CD4-positive, alpha-beta memory T cell (primary cell): ENCODE measurements at regions of chr16 and their contacts with region 1.

Region 1: DNA sequence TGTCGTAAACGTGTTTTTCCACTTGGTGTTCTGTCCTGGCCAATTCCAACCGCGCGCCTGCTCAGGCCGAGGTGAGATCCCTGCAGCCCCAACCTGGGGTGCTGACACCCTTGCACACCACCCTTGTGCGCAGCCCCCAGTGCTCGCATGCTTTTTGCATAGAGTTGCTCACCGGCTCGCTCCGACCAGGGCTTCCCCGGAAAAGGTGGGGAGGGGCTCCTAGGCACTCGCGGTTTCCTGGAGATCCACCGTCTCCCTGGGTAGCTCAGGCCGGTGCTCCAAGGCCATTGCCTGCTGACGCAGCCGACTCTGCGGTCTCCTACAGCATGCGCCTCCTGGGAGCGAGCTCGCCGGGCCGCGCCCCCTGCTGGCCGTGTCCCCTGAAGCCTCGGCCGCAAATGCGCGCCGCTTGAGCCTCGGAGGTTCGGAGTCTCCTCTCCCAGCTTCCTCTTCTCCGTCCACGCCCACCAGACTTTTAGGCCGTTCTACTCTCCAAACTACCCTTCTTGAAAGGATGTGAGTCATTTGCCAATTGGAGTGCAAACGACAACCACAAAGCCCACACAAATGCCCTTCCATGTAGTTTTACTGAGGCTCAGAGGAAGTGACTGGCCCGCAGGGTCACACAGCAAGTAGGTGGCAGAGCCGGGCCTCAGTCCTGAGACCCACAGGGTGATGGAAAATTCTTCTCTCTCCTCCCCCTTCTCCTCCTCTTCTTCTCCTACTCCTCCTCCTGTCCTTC is 7.2 kb upstream of the PDP2 start:
- DNase-seq: peak; percentile 80 to 94 (median 82)
- H3K4me3 ChIP-seq: peak overlapping the region in 1 of 2 donors; percentile 52
- H3K4me3 Mint-ChIP-seq: peak overlapping the region; percentile 61 to 90 (median 82)
- H3K27ac ChIP-seq: peak overlapping the region; percentile 36
- H3K27ac Mint-ChIP-seq: peak overlapping the region; percentile 75 to 95 (median 86)
- H3K4me1 ChIP-seq: peaks cover 22% of the 10 kb centered on the region
- H3K4me1 Mint-ChIP-seq: peaks cover 18 to 37% (median 23%) of the 10 kb centered on the region in 4 donors
- H3K27me3 ChIP-seq: no peaks in the 10 kb centered on the region
- H3K27me3 Mint-ChIP-seq: no peaks in the 10 kb centered on the region

Region 2: GRCh38 chr16:66490774-66491715 is 382.1 kb before region 1 on chr16:
- CTCF ChIA-PET with region 1: no interaction called
- POLR2A ChIA-PET with region 1: no interaction called
- intact Hi-C with region 1: no loop called
- DNase-seq: no peak
- H3K4me3 ChIP-seq: no peak overlapping the region
- H3K4me3 Mint-ChIP-seq: peak overlapping the region in 1 of 8 donors; percentile 36
- H3K27ac ChIP-seq: no peak overlapping the region
- H3K27ac Mint-ChIP-seq: peak overlapping the region in 3 of 7 donors; percentile 2 to 30 (median 18)
- H3K4me1 ChIP-seq: no peaks in the 10 kb centered on the region
- H3K4me1 Mint-ChIP-seq: peaks cover 0 to 2% (median 0%) of the 10 kb centered on the region in 4 donors
- H3K27me3 ChIP-seq: no peaks in the 10 kb centered on the region
- H3K27me3 Mint-ChIP-seq: peaks cover 0 to 2% of the 10 kb centered on the region in 2 donors

Region 3: GRCh38 chr16:66728117-66728787 is 144.9 kb before region 1 on chr16:
- CTCF ChIA-PET with region 1: interaction called, 18 read pairs
- POLR2A ChIA-PET with region 1: interaction called, 3 read pairs
- intact Hi-C with region 1: loop called (anchors 2 kb)
- DNase-seq: peak in 4 of 5 donors; percentile 42 to 56 (median 46)
- H3K4me3 ChIP-seq: no peak overlapping the region
- H3K4me3 Mint-ChIP-seq: no peak overlapping the region
- H3K27ac ChIP-seq: no peak overlapping the region
- H3K27ac Mint-ChIP-seq: peak overlapping the region in 5 of 7 donors; percentile 12 to 73 (median 52)
- H3K4me1 ChIP-seq: no peaks in the 10 kb centered on the region
- H3K4me1 Mint-ChIP-seq: peaks cover 3 to 6% (median 5%) of the 10 kb centered on the region in 4 donors
- H3K27me3 ChIP-seq: no peaks in the 10 kb centered on the region
- H3K27me3 Mint-ChIP-seq: no peaks in the 10 kb centered on the region

Region 4: DNA sequence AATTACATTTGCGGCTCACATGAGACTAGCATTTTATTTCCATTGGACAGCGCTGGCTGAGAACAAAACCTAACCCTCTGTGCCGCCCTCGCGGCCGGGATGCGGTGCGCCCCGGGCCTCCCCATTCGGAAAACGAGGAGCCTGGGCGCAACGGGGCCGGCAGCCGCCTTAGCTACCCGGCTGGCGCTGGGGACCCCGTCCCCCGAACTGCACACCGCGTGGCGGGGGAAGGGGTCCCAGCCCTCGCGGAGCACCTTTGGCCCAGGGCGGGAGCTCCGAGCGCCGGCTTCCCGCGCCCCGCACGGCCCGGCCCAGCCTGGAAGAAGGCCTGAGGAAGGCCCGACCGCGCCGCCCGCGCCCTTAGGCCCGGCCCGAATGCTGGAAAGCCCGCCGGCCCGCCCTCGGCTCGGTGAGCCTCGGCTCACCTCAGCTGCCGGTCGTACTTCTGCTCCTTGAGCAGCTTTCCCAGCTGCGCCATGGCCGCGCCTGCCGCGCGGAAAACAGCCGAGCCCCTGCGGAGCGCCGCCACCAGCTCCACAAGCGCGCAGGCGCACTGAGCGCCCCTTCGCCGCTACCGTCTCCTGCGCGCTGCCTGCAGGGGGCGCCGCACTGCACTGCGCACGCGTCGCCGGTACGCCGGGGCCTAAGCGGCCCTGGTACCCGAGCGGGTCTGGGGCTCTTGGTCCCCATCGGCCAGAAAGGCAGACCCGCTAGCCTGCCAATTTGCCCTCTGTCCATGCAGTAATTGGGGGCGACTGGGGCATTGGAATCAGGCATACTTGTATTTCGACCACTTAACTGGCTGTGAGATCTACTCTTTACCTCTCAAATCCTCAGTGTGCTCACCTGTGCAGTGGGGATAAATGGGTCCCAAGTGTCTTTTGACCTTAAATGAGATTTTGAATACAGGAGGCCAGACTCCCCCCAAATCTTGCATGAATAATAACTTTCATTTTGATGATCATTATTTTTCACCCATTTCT is 42.4 kb before region 1 on chr16 and contains the start of gene NAE1:
- CTCF ChIA-PET with region 1: interaction called, 95 read pairs
- POLR2A ChIA-PET with region 1: interaction called, 15 read pairs
- intact Hi-C with region 1: loop called (anchors 2 kb)
- DNase-seq: peak; percentile 81 to 94 (median 91)
- H3K4me3 ChIP-seq: peak within 1 kb of the TSS; percentile 25 to 64
- H3K4me3 Mint-ChIP-seq: peak within 1 kb of the TSS; percentile 76 to 84 (median 82)
- H3K27ac ChIP-seq: peak within 1 kb of the TSS; percentile 68
- H3K27ac Mint-ChIP-seq: peak within 1 kb of the TSS; percentile 38 to 82 (median 68)
- H3K4me1 ChIP-seq: peaks cover 39% of the 10 kb centered on the region
- H3K4me1 Mint-ChIP-seq: peaks cover 20 to 34% (median 26%) of the 10 kb centered on the region in 4 donors
- H3K27me3 ChIP-seq: no peaks in the 10 kb centered on the region
- H3K27me3 Mint-ChIP-seq: peaks cover under 1 to 2% of the 10 kb centered on the region in 2 donors
- total RNA-seq, gene NAE1: 93.8 to 95.3 TPM

Region 5: GRCh38 chr16:66888647-66889615 is 15.8 kb after region 1 on chr16:
- CTCF ChIA-PET with region 1: interaction called, 12 read pairs
- POLR2A ChIA-PET with region 1: interaction called, 3 read pairs
- intact Hi-C with region 1: no loop called
- DNase-seq: no peak
- H3K4me3 ChIP-seq: no peak overlapping the region
- H3K4me3 Mint-ChIP-seq: no peak overlapping the region
- H3K27ac ChIP-seq: no peak overlapping the region
- H3K27ac Mint-ChIP-seq: peak overlapping the region in 3 of 7 donors; percentile 18 to 32 (median 30)
- H3K4me1 ChIP-seq: peaks cover 8% of the 10 kb centered on the region
- H3K4me1 Mint-ChIP-seq: peaks cover 11 to 27% (median 21%) of the 10 kb centered on the region in 4 donors
- H3K27me3 ChIP-seq: no peaks in the 10 kb centered on the region
- H3K27me3 Mint-ChIP-seq: no peaks in the 10 kb centered on the region